Activated CD4-positive, alpha-beta memory T cell treated with anti-CD3 and anti-CD28 coated beads, Interleukin-2, amount 10 ng/mL, durations not matched to agents 7 days and 5 days (primary cell): ENCODE measurements at regions of chrX and their contacts with region 1.

Region 1: GRCh38 chrX:120380699-120381098 is 18.8 kb downstream of the ATP1B4 start:
- DNase-seq: peak; percentile 20
- H3K4me3 Mint-ChIP-seq: no peak overlapping the region
- H3K27ac Mint-ChIP-seq: no peak overlapping the region
- H3K4me1 Mint-ChIP-seq: peaks cover 9% of the 10 kb centered on the region
- H3K27me3 Mint-ChIP-seq: peaks cover 10% of the 10 kb centered on the region

Region 2: DNA sequence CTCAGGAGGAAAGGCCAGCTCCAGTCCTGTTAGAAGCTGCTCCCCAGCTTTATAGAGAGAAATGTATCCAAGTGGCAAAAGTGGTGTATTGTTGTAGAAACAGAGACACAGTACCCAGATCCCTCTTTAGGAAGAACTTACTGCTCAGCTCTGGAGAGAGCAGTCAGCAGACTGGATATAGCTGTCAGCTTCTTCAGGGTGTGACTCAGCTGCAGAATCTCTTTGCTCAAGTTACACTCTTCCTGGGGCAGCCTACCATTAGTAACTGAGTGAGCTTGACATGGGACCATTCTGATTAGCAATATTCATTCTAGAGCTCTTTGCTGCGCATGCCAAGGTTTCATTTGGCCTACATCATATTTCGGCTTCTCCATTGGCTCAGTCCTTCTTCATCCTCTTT is 21.7 kb after region 1 on chrX:
- CTCF ChIA-PET with region 1: no interaction called
- POLR2A ChIA-PET with region 1: no interaction called
- DNase-seq: no peak
- H3K4me3 Mint-ChIP-seq: no peak overlapping the region
- H3K27ac Mint-ChIP-seq: no peak overlapping the region
- H3K4me1 Mint-ChIP-seq: no peaks in the 10 kb centered on the region
- H3K27me3 Mint-ChIP-seq: no peaks in the 10 kb centered on the region

Region 3: DNA sequence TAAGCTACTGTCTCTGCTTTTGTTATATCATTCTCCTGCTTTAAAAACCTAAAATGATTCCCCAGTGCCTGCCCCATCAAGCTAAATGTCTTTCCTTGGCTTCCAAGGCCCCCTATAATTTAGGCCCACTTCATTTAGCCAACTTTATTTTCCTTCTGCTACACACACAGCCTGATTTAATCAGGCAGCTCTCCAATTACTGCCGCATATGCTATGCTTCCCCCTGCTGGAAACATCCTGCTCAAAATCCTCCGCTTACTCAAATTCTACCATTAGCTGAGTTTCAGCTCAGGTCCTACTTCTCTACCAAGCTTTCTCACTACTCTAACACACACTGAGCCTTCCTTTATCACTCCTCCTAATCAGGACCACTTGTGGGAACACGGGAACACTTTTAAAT is 71.4 kb after region 1 on chrX:
- CTCF ChIA-PET with region 1: interaction called, 16 read pairs
- POLR2A ChIA-PET with region 1: no interaction called
- DNase-seq: no peak
- H3K4me3 Mint-ChIP-seq: no peak overlapping the region
- H3K27ac Mint-ChIP-seq: peak overlapping the region; percentile 24
- H3K4me1 Mint-ChIP-seq: peaks cover 32% of the 10 kb centered on the region
- H3K27me3 Mint-ChIP-seq: no peaks in the 10 kb centered on the region